Panc1 (cell line): ENCODE measurements at regions of chr11 and their contacts with region 1.

Region 1: DNA sequence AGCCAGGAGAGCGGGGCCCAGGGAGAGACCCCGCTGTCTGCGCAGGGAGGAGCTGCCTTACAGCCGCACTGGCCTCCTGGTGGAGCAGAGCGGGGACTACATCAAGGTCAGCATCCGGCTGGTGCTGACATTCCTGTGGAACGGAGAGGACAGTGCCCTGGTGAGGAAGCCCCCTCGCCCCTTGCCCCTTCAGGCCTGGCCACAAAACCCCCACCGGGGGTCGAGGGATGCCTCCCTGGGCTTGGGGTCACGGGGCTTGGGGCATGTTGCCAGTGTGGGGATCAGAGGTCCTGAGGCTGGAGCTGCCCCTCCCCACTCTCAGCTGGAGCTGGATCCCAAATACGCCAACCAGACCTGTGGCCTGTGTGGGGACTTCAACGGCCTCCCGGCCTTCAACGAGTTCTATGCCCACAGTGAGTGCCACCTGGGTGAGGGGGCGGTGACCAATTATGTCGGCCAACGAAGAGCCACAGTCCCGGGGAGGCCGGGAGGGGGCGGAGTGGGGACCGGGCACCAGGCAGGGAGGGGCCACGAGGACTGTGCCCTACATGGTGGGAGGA is 4.2 kb downstream of the MUC5B start:
- DNase-seq: no peak
- ATAC-seq: peak; percentile 68
- H3K4me3 ChIP-seq: no peak overlapping the region
- H3K27ac ChIP-seq: no peak overlapping the region
- H3K4me1 ChIP-seq: peaks cover 29% of the 10 kb centered on the region
- H3K27me3 ChIP-seq: no peaks in the 10 kb centered on the region; the same call in 1 of the 2 replicates
- CTCF ChIP-seq: peak; percentile 83

Region 2: DNA sequence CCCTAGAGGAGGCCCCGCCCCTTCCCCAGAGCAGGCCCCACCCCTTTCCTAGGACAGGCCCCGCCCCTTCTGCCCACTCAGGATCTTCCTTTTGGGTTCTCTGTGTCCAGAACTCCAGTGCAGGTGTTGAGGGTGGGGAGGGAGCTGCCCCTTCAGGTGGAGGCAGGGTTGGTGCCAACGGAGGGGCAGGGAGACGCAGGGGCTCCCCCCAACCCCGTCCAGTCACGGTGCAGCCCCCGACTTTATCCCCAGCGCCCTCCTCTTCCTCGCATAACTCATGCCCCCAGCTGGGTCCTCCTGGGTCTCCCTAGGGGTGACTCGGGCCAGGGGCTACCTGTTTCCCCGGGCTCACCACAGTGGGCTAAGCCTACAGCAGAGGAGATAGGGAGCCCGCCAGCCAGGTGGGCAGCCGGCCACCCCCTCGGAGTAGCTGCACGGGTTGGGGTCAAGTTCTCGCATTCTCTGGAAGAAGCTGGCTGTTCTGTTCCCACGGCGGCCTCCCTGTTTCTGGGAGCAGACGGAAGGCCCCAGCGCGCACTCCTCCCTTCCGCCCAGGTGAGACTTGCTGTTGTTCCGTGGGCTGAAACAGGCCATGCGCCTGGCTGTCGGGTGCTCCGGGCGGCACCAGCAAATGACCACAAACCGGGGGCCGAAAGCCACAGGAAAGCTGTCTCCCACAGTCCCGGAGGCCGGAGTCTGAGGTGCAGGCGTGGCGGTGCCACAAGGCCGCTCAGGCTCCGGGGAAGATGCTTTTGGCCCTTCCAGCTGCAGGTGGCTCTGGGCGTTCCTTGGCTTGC is 113.5 kb before region 1 on chr11:
- CTCF ChIA-PET with region 1: no interaction called
- POLR2A ChIA-PET with region 1: no interaction called
- in situ Hi-C with region 1: no loop called
- intact Hi-C with region 1: loop called (anchors 10 kb)
- DNase-seq: no peak
- ATAC-seq: peak; percentile 43
- H3K4me3 ChIP-seq: no peak overlapping the region
- H3K27ac ChIP-seq: no peak overlapping the region
- H3K4me1 ChIP-seq: peaks cover 9% of the 10 kb centered on the region; the same call in 1 of the 2 replicates
- H3K27me3 ChIP-seq: no peaks in the 10 kb centered on the region
- CTCF ChIP-seq: no peak

Region 3: GRCh38 chr11:1153951-1154493 is 73.0 kb before region 1 on chr11:
- CTCF ChIA-PET with region 1: no interaction called
- POLR2A ChIA-PET with region 1: no interaction called
- in situ Hi-C with region 1: no loop called
- intact Hi-C with region 1: no loop called
- DNase-seq: peak; percentile 96
- ATAC-seq: peak; percentile 86
- H3K4me3 ChIP-seq: no peak overlapping the region
- H3K27ac ChIP-seq: peak overlapping the region; percentile 96
- H3K4me1 ChIP-seq: peaks cover 63% of the 10 kb centered on the region
- H3K27me3 ChIP-seq: no peaks in the 10 kb centered on the region
- CTCF ChIP-seq: no peak

Region 4: DNA sequence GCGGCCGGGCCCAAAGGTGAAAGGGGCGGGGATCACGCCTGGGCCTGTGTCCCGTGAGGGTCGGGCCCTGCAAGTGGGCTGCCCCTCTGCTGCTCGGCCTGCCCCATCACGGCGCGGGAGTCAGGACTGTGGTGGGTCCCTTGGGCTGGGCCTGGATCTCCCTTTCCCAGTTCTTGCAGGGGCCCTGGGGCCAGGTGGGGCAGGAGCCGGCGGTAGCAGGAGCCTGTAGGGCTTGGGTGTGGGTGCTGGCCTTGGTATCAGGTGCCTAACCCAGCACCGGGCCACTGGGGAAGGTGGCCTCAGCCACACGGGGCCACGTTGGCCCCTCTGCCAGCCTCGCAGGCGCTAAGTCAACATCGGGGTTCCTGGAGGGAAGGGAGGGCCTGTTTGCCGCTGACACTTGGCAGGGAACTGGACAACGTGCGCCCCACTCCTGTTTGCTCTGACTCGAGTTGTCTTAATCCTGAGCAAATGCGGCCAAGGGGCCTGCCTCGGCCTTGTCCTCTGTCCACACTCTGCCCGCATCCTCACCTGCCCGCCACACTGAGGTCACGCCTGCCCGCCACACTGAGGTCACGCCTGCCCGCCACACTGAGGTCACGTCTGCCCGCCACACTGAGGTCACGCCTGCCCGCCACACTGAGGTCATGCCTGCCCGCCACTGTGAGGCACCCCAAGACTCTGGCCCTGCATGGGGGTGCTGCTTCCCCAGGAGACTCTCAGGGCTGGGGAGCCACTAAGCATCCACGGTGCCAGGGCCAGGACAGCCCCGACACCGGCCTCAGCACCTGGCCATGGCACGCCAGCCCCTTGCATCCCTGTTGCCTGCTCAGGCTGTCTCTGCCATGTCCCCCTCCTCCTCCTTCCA is 18.4 kb before region 1 on chr11:
- CTCF ChIA-PET with region 1: interaction called, 11 read pairs
- POLR2A ChIA-PET with region 1: interaction called, 3 read pairs
- in situ Hi-C with region 1: no loop called
- intact Hi-C with region 1: no loop called
- DNase-seq: no peak
- ATAC-seq: no peak
- H3K4me3 ChIP-seq: no peak overlapping the region
- H3K27ac ChIP-seq: no peak overlapping the region
- H3K4me1 ChIP-seq: peaks cover 3% of the 10 kb centered on the region; the same call in 1 of the 2 replicates
- H3K27me3 ChIP-seq: no peaks in the 10 kb centered on the region; the same call in 1 of the 2 replicates
- CTCF ChIP-seq: no peak